ENCODE measurements at regions of chr6 and their contacts with region 1.

Region 1: GRCh38 chr6:89371849-89372505 is 19.5 kb upstream of the UBE2J1 start:
- DNase-seq: peak; percentile 74
- H3K4me3 ChIP-seq: no peak overlapping the region; a peak in 1 of 4 replicates
- H3K27ac ChIP-seq: no peak overlapping the region
- H3K4me1 ChIP-seq: peaks cover 0 to 8% of the 10 kb centered on the region in 2 experiments; a peak in 2 of 4 replicates
- H3K27me3 ChIP-seq: no peaks in the 10 kb centered on the region
- CTCF ChIP-seq: peak; percentile 89
- EP300 ChIP-seq: peak in 1 of 2 experiments; percentile 31; a peak in 1 of 4 replicates
- RAD21 ChIP-seq: peak; percentile 79

Region 2: DNA sequence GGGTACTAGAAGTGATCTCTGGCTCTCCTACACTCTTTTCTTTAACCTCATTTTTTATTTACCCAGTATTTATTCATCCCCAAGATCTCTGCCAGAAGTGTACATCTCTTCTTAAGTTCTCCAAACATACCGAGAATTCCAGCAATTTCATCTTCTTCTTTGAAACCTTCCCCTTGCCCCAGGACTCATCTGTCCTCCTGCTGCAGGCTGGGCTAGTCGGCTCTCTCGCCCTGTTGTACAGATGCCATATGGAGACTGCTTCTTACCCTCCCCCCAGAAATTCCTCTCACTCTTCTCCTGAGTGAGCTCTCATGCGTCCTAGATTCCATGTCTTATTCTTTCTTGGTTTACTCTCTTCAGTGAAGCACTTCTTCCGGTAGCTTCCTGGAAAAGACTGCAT is 313.4 kb before region 1 on chr6:
- CTCF ChIA-PET with region 1: no interaction called
- POLR2A ChIA-PET with region 1: no interaction called
- DNase-seq: no peak
- H3K4me3 ChIP-seq: no peak overlapping the region
- H3K27ac ChIP-seq: no peak overlapping the region
- H3K4me1 ChIP-seq: no peaks in the 10 kb centered on the region
- H3K27me3 ChIP-seq: no peaks in the 10 kb centered on the region
- CTCF ChIP-seq: no peak
- EP300 ChIP-seq: no peak
- RAD21 ChIP-seq: no peak

Region 3: DNA sequence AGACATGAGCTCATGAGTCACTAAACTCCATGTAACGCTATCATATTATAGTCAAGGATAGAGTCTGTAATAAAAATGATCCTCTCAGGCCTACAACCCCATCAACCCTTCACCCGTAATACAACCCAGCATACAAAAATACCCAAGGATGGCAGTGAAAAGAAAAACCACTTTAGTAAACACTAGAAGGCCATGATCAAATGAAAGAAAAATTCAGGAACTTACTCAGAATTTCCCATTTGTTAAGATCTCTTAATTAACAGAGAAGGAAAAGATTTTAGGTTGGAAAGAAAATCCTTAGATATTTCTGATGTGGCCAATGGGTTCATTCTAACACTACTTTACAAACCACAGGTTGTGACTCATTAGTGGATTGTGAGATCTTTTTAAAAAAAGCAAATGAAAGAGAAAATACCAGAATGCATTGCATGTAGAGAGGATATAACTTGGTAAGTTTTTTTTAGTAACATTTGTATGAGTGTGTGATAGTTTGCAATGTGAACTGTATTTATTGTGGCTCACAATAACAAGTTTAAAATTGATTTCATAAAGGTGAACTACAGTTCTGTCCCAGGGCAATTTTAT is 11.5 kb before region 1 on chr6:
- CTCF ChIA-PET with region 1: interaction called, 50 read pairs
- POLR2A ChIA-PET with region 1: interaction called, 3 read pairs
- DNase-seq: no peak
- H3K4me3 ChIP-seq: no peak overlapping the region
- H3K27ac ChIP-seq: peak overlapping the region in 1 of 2 experiments; percentile 35; a peak in 1 of 4 replicates
- H3K4me1 ChIP-seq: no peaks in the 10 kb centered on the region; a peak in 1 of 4 replicates
- H3K27me3 ChIP-seq: no peaks in the 10 kb centered on the region
- CTCF ChIP-seq: no peak
- EP300 ChIP-seq: no peak
- RAD21 ChIP-seq: no peak

Region 4: GRCh38 chr6:89412071-89413005 is 40.4 kb after region 1 on chr6 and contains the start of gene RRAGD:
- CTCF ChIA-PET with region 1: interaction called, 70 read pairs
- POLR2A ChIA-PET with region 1: no interaction called
- DNase-seq: peak; percentile 91
- H3K4me3 ChIP-seq: peak within 1 kb of the TSS; percentile 63 to 66
- H3K27ac ChIP-seq: peak within 1 kb of the TSS in 1 of 2 experiments; percentile 28; a peak in 1 of 4 replicates
- H3K4me1 ChIP-seq: peaks cover 0 to 12% of the 10 kb centered on the region in 2 experiments; a peak in 1 of 4 replicates
- H3K27me3 ChIP-seq: peaks cover 40% of the 10 kb centered on the region; the same call in 1 of the 2 replicates
- CTCF ChIP-seq: no peak
- EP300 ChIP-seq: no peak
- RAD21 ChIP-seq: no peak
- polyA plus RNA-seq, gene RRAGD: 0.05 and 0.07 TPM in 2 replicates

Region 5: GRCh38 chr6:89597988-89598692 is 226.2 kb after region 1 on chr6:
- CTCF ChIA-PET with region 1: interaction called, 16 read pairs
- POLR2A ChIA-PET with region 1: no interaction called
- DNase-seq: peak; percentile 62
- H3K4me3 ChIP-seq: no peak overlapping the region
- H3K27ac ChIP-seq: no peak overlapping the region
- H3K4me1 ChIP-seq: no peaks in the 10 kb centered on the region
- H3K27me3 ChIP-seq: no peaks in the 10 kb centered on the region
- CTCF ChIP-seq: peak; percentile 49
- EP300 ChIP-seq: no peak
- RAD21 ChIP-seq: peak; percentile 80